ENCODE measurements at regions of chr6 and their contacts with region 1.

Region 1: GRCh38 chr6:79525272-79526100 is 11.7 kb downstream of the LCA5 start:
- DNase-seq: no peak
- H3K4me3 ChIP-seq: no peak overlapping the region
- H3K27ac ChIP-seq: no peak overlapping the region
- H3K4me1 ChIP-seq: no peaks in the 10 kb centered on the region
- H3K27me3 ChIP-seq: no peaks in the 10 kb centered on the region
- CTCF ChIP-seq: no peak

Region 2: DNA sequence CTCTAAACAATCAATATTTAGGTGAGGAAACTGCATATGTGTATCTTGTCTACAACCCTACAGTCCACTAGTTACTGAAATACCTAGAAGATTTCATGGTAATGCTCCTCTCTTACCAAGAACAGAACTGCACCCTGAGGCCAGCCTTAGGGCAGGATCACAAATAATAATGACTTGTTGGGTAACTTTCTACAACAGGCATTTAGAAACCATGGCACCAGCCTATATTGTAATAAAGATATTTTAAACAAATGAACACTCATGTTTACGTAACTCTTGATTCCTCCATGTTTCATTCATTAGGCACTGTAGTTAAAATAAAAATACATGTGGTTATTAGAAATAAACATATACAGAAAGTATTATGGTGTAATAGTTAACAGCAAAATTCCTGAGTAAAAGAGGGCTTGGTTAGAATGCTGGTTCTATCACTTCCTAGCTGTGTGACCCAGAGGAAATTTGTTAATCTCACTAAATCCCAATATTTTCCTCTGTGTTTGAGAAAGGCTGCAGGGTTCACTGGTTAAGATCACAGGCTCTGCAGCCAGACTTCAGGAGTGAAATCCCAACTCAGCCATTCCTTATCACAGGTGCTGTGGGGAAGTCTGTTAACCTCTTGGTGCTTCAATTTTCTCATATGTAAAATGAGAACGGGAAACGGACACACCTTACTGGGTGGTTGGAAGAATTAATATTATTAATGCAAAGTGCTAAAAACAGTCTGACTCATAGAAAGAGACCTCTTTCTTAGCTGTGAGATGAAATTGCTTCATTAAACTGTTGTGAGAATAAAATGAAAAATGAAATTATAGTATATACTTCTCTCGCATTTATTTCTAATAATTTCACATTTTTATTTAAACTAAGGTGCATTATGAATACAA is 299.5 kb before region 1 on chr6:
- intact Hi-C with region 1: loop called (anchors 5 kb)
- DNase-seq: no peak
- H3K4me3 ChIP-seq: no peak overlapping the region
- H3K27ac ChIP-seq: no peak overlapping the region
- H3K4me1 ChIP-seq: peaks cover 0 to 3% (median 0%) of the 10 kb centered on the region in 4 donors
- H3K27me3 ChIP-seq: no peaks in the 10 kb centered on the region
- CTCF ChIP-seq: no peak

Measured in tibial artery (tissue), 4 donors.